CD14-positive monocyte (primary cell): ENCODE measurements at regions of chr15 and their contacts with region 1.

Region 1: DNA sequence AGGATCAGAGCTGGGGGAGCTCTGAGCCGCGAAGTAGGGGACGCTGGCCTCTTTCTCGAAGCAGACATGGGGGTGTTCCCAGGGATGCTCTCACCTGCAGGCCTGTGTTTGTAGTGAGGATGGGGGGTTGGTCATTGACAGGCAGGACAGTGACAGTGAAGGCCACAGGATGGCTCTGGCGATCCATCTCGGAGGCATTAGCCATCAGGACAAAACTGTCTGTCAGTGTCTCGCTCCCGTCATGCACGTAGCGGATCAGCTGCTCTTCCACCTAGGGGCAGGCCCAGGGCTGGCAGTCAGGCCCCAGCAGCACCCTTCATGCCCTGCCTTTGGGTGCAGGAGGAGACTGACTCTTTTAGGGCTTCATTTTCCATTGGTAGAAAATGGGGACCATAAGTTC is 28.0 kb downstream of the CSPG4 start:
- DNase-seq: no peak
- H3K4me3 ChIP-seq: no peak overlapping the region
- H3K4me3 Mint-ChIP-seq: peak overlapping the region in 1 of 2 donors; percentile 65
- H3K27ac ChIP-seq: no peak overlapping the region
- H3K27ac Mint-ChIP-seq: no peak overlapping the region
- H3K4me1 ChIP-seq: no peaks in the 10 kb centered on the region
- H3K4me1 Mint-ChIP-seq: no peaks in the 10 kb centered on the region
- H3K27me3 ChIP-seq: no peaks in the 10 kb centered on the region
- H3K27me3 Mint-ChIP-seq: peaks cover 5 to 11% (median 10%) of the 10 kb centered on the region in 3 donors
- CTCF ChIP-seq: no peak

Region 2: GRCh38 chr15:75508840-75509532 is 175.7 kb before region 1 on chr15:
- intact Hi-C with region 1: loop called in 1 of 2 experiments (anchors 10 kb)
- DNase-seq: no peak
- H3K4me3 ChIP-seq: no peak overlapping the region
- H3K4me3 Mint-ChIP-seq: no peak overlapping the region
- H3K27ac ChIP-seq: no peak overlapping the region
- H3K27ac Mint-ChIP-seq: no peak overlapping the region
- H3K4me1 ChIP-seq: no peaks in the 10 kb centered on the region
- H3K4me1 Mint-ChIP-seq: no peaks in the 10 kb centered on the region
- H3K27me3 ChIP-seq: no peaks in the 10 kb centered on the region
- H3K27me3 Mint-ChIP-seq: no peaks in the 10 kb centered on the region
- CTCF ChIP-seq: peak; percentile 30

Region 3: GRCh38 chr15:75723847-75724660 is 39.4 kb after region 1 on chr15:
- intact Hi-C with region 1: loop called in 1 of 2 experiments (anchors 5 kb)
- DNase-seq: peak; percentile 83 to 93 (median 91)
- H3K4me3 ChIP-seq: no peak overlapping the region
- H3K4me3 Mint-ChIP-seq: no peak overlapping the region
- H3K27ac ChIP-seq: peak overlapping the region in 1 of 2 donors; percentile 27
- H3K27ac Mint-ChIP-seq: peak overlapping the region; percentile 69 to 90 (median 87)
- H3K4me1 ChIP-seq: no peaks in the 10 kb centered on the region
- H3K4me1 Mint-ChIP-seq: peaks cover 17% of the 10 kb centered on the region
- H3K27me3 ChIP-seq: no peaks in the 10 kb centered on the region
- H3K27me3 Mint-ChIP-seq: peaks cover 9 to 31% (median 18%) of the 10 kb centered on the region in 3 donors
- CTCF ChIP-seq: no peak

Region 4: GRCh38 chr15:75732809-75733451 is 48.3 kb after region 1 on chr15:
- intact Hi-C with region 1: loop called in 1 of 2 experiments (anchors 5 kb)
- DNase-seq: peak; percentile 43 to 61 (median 60)
- H3K4me3 ChIP-seq: no peak overlapping the region
- H3K4me3 Mint-ChIP-seq: peak overlapping the region; percentile 44 to 92
- H3K27ac ChIP-seq: no peak overlapping the region
- H3K27ac Mint-ChIP-seq: no peak overlapping the region
- H3K4me1 ChIP-seq: peaks cover 44 to 48% of the 10 kb centered on the region in 2 donors
- H3K4me1 Mint-ChIP-seq: peaks cover 53% of the 10 kb centered on the region
- H3K27me3 ChIP-seq: peaks cover 0 to 7% of the 10 kb centered on the region in 2 donors
- H3K27me3 Mint-ChIP-seq: peaks cover 15 to 31% (median 18%) of the 10 kb centered on the region in 3 donors
- CTCF ChIP-seq: peak; percentile 91

Region 5: DNA sequence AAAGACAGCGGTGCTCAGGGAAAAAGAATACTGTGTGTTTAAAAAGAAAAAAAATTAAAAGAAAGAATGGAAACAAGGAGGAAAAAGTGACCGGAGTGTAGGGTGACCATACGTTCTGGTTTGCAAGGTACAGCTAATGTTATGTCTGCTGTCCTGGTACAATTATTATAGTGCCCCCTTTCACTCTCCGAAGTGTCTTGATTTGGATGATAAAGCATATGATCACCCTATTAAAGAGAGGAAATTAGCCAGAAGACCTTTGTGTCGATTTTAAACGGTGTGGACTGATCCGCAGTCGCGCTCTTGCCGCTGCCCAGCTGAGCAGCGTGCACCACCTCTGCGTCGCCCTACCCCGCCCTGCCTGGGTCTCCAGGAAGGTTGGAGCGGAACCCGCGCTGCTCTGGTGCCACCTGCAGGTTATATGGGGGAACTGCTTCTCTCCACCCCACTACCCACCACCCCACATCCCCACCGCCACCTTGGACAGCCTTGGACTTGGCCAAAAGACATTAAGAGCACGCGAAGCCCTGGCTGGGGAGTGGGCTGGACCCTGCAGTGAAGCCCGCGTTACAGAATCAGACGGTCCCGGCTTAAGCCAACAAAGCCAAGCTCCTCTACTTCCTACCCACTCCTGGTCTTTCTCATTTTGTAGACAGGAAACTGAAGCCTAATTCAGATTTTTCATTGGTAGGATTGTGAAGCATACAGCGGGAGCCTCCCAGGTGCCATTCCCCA is 117.4 kb after region 1 on chr15:
- intact Hi-C with region 1: loop called in 1 of 2 experiments (anchors 1 kb)
- DNase-seq: peak; percentile 70 to 76 (median 71)
- H3K4me3 ChIP-seq: peak overlapping the region in 1 of 3 experiments; percentile 59
- H3K4me3 Mint-ChIP-seq: peak overlapping the region; percentile 64 to 88
- H3K27ac ChIP-seq: no peak overlapping the region
- H3K27ac Mint-ChIP-seq: peak overlapping the region in 1 of 7 donors; percentile 74
- H3K4me1 ChIP-seq: peaks cover 6 to 10% of the 10 kb centered on the region in 2 donors
- H3K4me1 Mint-ChIP-seq: peaks cover 9% of the 10 kb centered on the region
- H3K27me3 ChIP-seq: peaks cover 13 to 16% of the 10 kb centered on the region in 2 donors
- H3K27me3 Mint-ChIP-seq: peaks cover 18 to 39% (median 19%) of the 10 kb centered on the region in 3 donors
- CTCF ChIP-seq: peak; percentile 95